ENCODE measurements at regions of chr6 and their contacts with region 1.

Region 1: GRCh38 chr6:157461000-157461915 is 80.3 kb downstream of the ZDHHC14 start:
- DNase-seq: peak; percentile 42
- H3K4me3 Mint-ChIP-seq: peak overlapping the region; percentile 24
- H3K27ac Mint-ChIP-seq: peak overlapping the region; percentile 92
- H3K4me1 Mint-ChIP-seq: peaks cover 63% of the 10 kb centered on the region
- H3K27me3 Mint-ChIP-seq: no peaks in the 10 kb centered on the region

Region 2: DNA sequence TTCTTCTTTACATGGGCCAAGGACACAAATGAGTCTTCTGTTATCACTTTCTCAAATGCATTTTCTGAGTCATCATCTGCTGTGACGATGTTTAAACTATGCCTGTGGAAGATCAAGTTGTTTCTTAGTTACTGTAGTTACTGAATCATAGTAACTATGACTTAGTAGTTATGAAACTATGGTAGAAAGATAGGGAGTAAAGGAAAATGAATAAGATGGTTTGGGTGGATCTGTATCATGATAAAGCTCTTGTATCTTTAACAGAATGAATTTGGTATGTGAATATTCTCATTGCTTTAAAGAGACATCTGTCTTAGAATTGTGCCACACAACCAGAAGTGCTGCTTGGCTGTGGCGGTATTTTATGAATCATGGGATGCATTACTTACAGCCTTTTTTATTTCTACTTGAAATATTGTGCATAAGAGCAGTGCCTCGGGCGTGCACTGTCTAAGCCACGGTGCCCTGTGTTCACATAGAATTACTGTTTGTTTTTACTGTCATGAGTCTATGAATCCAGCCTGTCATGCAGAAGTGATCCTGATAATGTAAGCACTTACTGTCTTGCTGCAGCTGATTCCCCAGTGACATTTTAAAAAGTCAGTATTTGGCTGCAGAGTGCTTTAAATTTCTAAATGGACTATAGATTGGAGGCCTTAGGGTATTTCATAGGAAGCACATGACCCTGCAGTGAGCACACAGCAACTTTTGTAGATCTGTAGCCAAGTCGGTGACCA is 353.2 kb before region 1 on chr6:
- intact Hi-C with region 1: loop called (anchors 2 kb)
- DNase-seq: no peak
- H3K4me3 Mint-ChIP-seq: peak overlapping the region; percentile 0
- H3K27ac Mint-ChIP-seq: peak overlapping the region; percentile 81
- H3K4me1 Mint-ChIP-seq: peaks cover 56% of the 10 kb centered on the region
- H3K27me3 Mint-ChIP-seq: no peaks in the 10 kb centered on the region

Region 3: DNA sequence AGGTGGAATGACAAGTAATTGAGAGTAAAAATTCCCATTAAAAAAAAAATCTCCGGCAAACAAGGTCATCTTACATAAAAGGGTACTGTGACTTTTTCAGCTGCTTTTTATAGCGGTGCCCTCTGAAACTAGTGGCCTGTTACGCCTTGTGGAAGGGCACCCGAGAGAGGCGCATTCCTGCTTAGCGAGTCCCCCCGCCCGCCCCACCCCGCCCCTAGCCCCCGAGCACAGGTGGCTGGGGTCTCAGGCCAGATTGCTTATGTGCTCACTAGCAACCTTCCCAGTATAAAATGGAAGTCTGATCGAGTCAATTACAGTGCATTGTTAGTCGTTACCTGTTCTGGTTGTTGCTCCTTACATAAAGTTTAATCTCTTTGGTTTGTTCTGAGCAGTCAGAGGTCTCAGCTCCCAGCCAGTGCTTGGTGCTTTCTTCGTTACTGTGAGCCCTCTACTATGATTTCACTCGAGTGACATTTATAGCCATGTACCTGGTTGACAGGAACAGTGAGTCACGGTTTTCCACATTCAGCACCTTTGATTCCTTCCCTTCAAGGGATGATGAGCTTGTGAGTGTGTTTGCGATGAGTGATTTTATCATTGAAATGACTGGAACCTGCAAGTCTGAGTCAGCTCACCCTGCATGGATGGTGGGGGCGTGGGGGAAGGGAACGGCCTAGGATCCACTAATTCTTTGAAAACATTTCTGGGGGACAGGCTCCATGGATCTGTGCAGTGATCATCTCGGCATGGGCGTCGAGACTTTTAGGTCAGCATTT is 32.6 kb before region 1 on chr6:
- intact Hi-C with region 1: loop called (anchors 2 kb)
- DNase-seq: no peak
- H3K4me3 Mint-ChIP-seq: no peak overlapping the region
- H3K27ac Mint-ChIP-seq: peak overlapping the region; percentile 69
- H3K4me1 Mint-ChIP-seq: peaks cover 28% of the 10 kb centered on the region
- H3K27me3 Mint-ChIP-seq: no peaks in the 10 kb centered on the region

Region 4: GRCh38 chr6:157503018-157503747 is 41.9 kb after region 1 on chr6:
- intact Hi-C with region 1: loop called (anchors 5 kb)
- DNase-seq: no peak
- H3K4me3 Mint-ChIP-seq: no peak overlapping the region
- H3K27ac Mint-ChIP-seq: no peak overlapping the region
- H3K4me1 Mint-ChIP-seq: peaks cover 21% of the 10 kb centered on the region
- H3K27me3 Mint-ChIP-seq: no peaks in the 10 kb centered on the region

Region 5: DNA sequence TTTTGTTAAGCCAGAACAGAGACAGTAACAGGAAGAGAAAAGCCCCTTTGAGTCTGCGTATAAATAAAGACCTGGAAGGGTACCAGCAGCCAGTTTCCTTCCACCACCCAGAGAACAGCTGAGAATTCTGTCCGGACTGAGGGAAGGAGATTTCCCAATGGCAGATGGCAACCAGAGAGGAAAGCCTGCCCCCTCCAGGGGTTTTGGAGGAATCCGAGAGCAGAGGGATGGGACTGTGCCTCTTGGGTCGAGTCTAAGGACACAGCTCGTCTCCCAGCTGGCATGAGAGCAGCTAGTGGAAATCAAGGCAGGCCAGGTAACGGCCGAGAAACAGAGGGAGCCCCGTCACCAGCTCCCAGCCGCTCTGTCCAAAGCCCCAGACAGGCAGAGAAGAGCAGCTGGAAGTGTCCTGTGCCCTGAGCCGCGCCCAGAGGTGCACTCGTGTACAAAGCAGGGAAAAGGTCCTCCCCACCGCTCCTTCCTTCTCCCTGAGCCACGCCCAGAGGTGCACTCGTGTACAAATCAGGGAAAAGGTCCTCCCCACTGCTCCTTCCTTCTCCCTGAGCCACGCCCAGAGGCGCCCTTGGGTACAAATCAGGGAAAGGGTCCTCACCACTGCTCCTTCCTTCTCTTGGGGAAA is 227.8 kb after region 1 on chr6:
- intact Hi-C with region 1: no loop called
- DNase-seq: no peak
- H3K4me3 Mint-ChIP-seq: no peak overlapping the region
- H3K27ac Mint-ChIP-seq: no peak overlapping the region
- H3K4me1 Mint-ChIP-seq: no peaks in the 10 kb centered on the region
- H3K27me3 Mint-ChIP-seq: peaks cover 10% of the 10 kb centered on the region

Region 6: DNA sequence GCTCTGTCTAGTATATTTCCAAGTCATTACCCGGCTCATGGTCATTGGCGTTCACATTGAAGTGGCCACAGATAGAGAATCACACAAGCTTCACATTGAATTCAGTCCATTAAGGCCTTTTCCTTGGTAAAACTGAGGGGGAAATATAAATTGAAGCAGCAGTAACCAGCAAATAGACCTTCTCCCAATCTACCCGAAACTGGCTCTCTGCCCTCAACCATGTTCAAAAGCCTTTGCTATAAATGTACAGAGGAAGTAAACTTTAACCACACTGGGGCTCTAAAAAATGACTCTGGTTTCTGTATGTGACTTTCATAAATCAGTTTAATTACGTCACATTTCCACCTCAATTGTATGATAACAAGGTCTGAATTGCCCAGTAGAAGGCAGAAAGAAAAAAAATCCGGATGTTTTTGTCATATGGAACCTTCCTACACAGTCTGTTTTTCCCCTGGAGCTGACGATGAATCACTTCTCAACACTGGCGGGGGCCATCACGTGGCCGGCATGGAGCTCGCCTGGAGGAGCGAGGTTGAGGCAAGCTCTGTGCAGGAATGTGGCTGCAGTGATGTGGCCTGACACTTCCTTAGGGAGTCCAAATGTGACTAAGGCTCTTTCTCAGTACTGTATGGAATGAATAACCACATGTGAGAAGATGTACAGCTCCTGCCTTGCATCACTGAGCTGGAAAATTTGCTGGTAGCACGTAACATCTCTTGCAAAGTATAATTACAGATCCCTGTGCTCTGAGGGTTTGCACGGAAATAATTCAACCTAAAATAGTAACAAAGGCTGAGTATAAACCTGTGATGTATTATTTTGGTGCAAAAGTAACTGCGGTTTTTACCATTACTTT is 303.1 kb after region 1 on chr6:
- intact Hi-C with region 1: loop called (anchors 5 kb)
- DNase-seq: peak; percentile 79
- H3K4me3 Mint-ChIP-seq: peak overlapping the region; percentile 43
- H3K27ac Mint-ChIP-seq: peak overlapping the region; percentile 86
- H3K4me1 Mint-ChIP-seq: peaks cover 65% of the 10 kb centered on the region
- H3K27me3 Mint-ChIP-seq: peaks cover 15% of the 10 kb centered on the region

Measured in activated T-helper 2 cell treated with anti-CD3 and anti-CD28 coated beads, Interferon-gamma antibody, Interleukin-2, Interleukin-4, amounts not matched to agents 10 μg/mL and 5 μg/mL and 100 μg/mL, durations not matched to agents 14 hours and 24 hours and 36 hours (primary cell).